Dendritic cell treated with granulocyte-macrophage colony-stimulating factor and Interleukin-4, amounts not matched to agents 40 ng/mL and 50 ng/mL, for 4 days (primary cell): ENCODE measurements at regions of chr5 and their contacts with region 1.

Region 1: GRCh38 chr5:112860929-112861637 is at the start of gene SRP19:
- H3K4me3 Mint-ChIP-seq: peak within 1 kb of the TSS; percentile 88
- H3K27ac Mint-ChIP-seq: peak within 1 kb of the TSS; percentile 89
- H3K4me1 Mint-ChIP-seq: peaks cover 22% of the 10 kb centered on the region
- H3K27me3 Mint-ChIP-seq: peaks cover 14% of the 10 kb centered on the region

Region 2: GRCh38 chr5:112948455-112948854 is 87.4 kb after region 1 on chr5:
- intact Hi-C with region 1: no loop called
- H3K4me3 Mint-ChIP-seq: no peak overlapping the region
- H3K27ac Mint-ChIP-seq: no peak overlapping the region
- H3K4me1 Mint-ChIP-seq: peaks cover 10% of the 10 kb centered on the region
- H3K27me3 Mint-ChIP-seq: peaks cover 34% of the 10 kb centered on the region

Region 3: DNA sequence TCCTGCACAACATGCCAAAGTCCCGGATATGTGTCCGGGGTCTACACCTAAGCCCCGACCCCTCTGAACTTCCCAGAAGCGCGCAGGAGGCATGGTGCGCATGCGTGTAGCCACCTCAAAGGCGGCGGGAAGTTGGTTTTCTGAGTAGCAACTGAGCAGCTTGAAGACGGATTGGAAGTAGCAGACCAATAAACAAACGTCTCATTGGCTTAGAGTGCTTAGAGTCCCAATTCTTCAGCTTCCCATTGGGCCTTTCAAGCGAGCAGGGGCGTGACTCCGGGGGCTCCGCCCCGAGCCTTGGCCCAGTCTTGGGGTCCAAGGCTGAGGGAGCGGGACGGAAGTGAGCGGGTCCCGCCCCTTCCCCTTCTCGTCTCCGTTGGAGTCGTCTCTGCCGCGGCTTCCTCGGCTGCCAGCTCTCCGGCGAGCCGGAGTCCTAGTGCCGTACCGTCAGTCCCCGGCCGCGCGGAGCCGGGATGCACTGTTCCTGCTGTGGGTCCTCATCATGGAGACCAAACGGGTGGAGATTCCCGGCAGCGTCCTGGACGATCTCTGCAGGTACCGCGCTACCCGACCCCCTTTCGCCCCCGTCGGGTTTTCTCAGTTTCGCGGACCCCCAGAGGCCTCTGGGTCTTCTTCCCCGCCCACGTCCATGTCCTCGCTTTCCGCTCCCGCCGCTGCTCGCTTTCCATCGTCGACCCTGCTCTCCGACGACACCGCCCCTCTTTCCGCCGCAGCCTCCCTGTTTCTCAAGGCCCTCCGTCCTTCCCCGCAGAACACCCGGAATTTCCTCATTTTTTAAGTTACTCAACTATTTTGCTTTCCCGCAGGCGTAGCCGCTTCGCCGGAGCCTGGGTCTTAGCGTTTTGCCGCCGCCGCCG is 115.6 kb after region 1 on chr5 and contains the start of gene DCP2:
- intact Hi-C with region 1: loop called (anchors 1 kb)
- H3K4me3 Mint-ChIP-seq: peak within 1 kb of the TSS; percentile 99
- H3K27ac Mint-ChIP-seq: peak within 1 kb of the TSS; percentile 100
- H3K4me1 Mint-ChIP-seq: peaks cover 26% of the 10 kb centered on the region
- H3K27me3 Mint-ChIP-seq: no peaks in the 10 kb centered on the region